ENCODE measurements at regions of chr17 and their contacts with region 1.

Region 1: GRCh38 chr17:73888862-73889261 is 244.6 kb upstream of the SDK2 start:
- DNase-seq: no peak
- H3K4me3 ChIP-seq: no peak overlapping the region
- H3K27ac ChIP-seq: no peak overlapping the region
- H3K4me1 ChIP-seq: no peaks in the 10 kb centered on the region
- H3K27me3 ChIP-seq: no peaks in the 10 kb centered on the region
- CTCF ChIP-seq: no peak
- EP300 ChIP-seq: no peak
- POLR2A ChIP-seq: no peak

Region 2: DNA sequence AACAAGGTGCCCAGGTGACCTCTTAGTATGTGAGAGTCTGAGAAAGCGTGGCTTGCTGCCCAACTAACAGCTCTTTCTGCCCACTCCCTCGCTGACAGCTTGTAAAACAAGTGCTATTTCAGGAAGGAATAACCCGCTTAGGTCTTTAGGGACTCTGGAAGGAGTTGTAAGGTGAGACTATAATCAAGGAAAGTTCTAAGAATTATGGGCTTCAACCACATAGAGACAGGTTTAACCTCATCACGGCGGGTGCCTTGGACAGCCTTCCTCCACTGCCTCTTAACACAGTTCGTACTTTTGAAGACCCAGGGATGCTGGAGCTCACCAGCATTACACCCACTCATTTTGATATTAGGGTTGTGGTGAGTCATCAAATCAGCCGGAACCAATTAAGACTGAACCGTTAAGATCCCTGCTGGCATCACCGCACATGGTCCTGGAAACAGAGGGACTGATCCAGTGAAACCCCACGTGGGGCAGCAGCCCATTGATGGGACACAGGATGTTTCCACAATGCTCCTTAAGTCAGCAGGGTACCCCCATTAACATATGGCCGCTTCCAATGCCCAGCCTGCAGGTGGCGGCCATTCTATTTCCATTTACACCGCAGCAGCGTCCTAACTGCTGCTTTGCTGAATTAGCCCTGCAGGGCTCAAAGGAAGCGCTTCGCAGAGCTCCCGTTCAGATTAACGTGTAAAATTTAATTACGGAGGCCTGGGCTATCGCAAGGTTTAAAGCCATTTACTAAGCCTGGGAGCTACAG is 68.0 kb before region 1 on chr17:
- intact Hi-C with region 1: loop called in 1 of 4 experiments (anchors 10 kb)
- DNase-seq: no peak
- H3K4me3 ChIP-seq: no peak overlapping the region
- H3K27ac ChIP-seq: no peak overlapping the region
- H3K4me1 ChIP-seq: no peaks in the 10 kb centered on the region
- H3K27me3 ChIP-seq: no peaks in the 10 kb centered on the region
- CTCF ChIP-seq: no peak
- EP300 ChIP-seq: no peak
- POLR2A ChIP-seq: no peak